ENCODE measurements at regions of chr22 and their contacts with region 1.

Region 1: DNA sequence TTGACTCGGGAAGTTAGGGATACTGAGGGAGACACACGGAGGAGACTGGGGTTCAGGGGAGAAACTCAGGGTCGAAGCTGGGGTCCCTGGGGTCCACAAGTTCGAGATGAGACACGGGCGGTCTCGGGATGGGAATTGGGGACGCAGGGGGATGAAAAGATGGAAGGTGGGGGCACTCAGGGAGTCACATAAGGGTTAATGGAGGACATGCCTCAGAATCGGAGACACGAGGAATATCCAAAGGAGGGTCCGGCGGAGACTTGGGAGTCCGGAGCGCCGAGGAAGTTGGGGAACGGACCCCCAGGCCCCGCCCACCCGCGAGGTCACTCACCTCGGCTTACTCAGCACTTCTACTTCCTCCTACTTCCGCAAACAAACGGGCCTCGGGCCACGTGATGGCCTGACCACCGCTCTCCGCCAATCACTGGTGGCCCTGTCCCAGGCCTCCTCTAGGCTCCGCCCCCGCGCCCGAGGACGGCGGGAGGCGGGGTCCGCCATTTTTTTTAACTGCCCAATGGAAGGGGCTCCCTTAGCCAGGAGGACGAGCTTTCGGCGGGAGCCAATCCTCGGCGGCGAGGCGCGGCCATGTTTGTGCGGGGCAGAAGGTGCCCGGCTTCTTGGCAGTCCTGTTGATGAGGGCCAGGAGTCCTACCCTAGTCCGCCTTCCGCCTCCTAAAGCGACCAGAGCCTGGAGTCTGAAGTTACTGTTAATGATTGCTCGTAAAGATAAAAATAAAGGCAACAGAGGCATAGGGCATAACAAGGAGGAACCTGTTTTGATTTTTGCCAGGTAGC is at the start of gene PLA2G6:
- DNase-seq: peak; percentile 98 to 99
- ATAC-seq: peak; percentile 96 to 98 (median 97)
- H3K4me3 ChIP-seq: peak within 1 kb of the TSS; percentile 41 to 75 (median 68)
- H3K27ac ChIP-seq: peak within 1 kb of the TSS; percentile 78 to 96 (median 90)
- H3K4me1 ChIP-seq: peaks cover 7 to 53% (median 26%) of the 10 kb centered on the region in 9 donors
- H3K27me3 ChIP-seq: no peaks in the 10 kb centered on the region
- CTCF ChIP-seq: no peak
- total RNA-seq, gene PLA2G6: 8.8 to 17.1 (median 13.5) TPM

Region 2: DNA sequence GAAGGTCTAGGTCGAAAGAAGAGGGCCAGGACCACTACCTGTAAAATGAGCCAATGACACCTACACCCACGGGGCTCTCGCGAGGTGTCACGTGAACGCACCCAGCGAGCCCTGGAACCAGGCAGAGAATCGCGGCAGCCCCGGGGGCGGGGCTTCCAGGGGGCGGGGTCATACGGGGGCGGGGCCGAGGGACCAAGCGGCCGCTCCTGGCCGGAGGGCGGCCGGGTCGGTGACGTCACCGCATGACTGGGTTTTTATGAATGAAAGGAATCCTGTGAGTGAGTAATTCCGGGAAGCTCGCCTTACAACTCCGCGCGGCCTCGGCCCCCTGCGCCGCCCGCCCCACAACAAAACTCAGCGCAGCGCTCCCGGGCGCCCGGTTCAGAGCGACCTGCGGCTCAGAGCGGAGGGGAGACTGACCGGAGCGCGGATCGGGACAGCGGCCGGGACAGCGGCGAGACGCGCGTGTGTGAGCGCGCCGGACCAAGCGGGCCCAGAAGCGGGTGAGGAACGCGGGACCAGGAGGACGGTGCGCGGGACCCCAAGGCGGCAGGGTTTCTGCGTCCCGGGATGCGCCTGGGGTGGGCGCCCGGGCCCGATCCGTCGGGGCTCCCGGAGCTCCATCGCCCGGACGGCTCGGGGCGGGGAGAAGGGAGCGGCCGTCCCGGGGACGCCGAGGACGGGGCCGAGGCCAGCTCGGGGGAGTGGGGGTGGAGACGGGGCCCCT is 20.2 kb after region 1 on chr22 and contains the start of gene MAFF:
- intact Hi-C with region 1: loop called in 2 of 10 experiments (anchors 1 to 2 kb)
- DNase-seq: peak; percentile 95 to 96
- ATAC-seq: peak; percentile 81 to 90 (median 87)
- H3K4me3 ChIP-seq: peak within 1 kb of the TSS; percentile 67 to 97 (median 84)
- H3K27ac ChIP-seq: peak within 1 kb of the TSS; percentile 94 to 100 (median 99)
- H3K4me1 ChIP-seq: peaks cover 17 to 42% (median 31%) of the 10 kb centered on the region in 9 donors
- H3K27me3 ChIP-seq: no peaks in the 10 kb centered on the region
- CTCF ChIP-seq: no peak
- total RNA-seq, gene MAFF: 2.9 to 21.2 (median 5.3) TPM

Region 3: GRCh38 chr22:38262051-38262795 is 80.6 kb after region 1 on chr22:
- intact Hi-C with region 1: no loop called
- DNase-seq: peak in 1 of 2 donors; percentile 69
- ATAC-seq: peak; percentile 31 to 55 (median 44)
- H3K4me3 ChIP-seq: no peak overlapping the region
- H3K27ac ChIP-seq: peak overlapping the region; percentile 21 to 93 (median 80)
- H3K4me1 ChIP-seq: peaks cover 33 to 96% (median 87%) of the 10 kb centered on the region in 9 donors
- H3K27me3 ChIP-seq: no peaks in the 10 kb centered on the region
- CTCF ChIP-seq: peak; percentile 39 to 75 (median 63)